ENCODE measurements at regions of chr6 and their contacts with region 1.

Region 1: GRCh38 chr6:17737704-17738252 is 31.1 kb upstream of the NUP153 start:
- DNase-seq: no peak

Region 2: DNA sequence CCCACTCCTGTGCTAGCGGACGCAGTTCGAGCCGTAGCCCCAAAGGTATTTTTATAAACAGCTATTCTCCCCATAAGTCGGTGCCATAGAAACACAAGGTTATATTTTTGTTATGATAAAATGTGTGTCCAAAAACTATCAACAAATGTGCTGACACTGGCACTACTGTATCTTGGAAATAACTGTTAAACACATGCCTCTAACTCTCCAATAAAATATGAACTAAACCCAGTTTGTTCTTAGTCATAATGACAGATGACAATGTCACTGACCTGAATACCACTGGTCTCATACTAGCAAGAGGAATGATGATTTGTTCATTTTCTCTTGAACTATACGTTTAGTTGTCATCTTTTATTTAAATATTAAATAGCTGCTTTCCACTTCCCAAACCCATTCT is 20.3 kb after region 1 on chr6:
- intact Hi-C with region 1: loop called in 1 of 2 experiments (anchors 1 kb)
- DNase-seq: no peak

Region 3: DNA sequence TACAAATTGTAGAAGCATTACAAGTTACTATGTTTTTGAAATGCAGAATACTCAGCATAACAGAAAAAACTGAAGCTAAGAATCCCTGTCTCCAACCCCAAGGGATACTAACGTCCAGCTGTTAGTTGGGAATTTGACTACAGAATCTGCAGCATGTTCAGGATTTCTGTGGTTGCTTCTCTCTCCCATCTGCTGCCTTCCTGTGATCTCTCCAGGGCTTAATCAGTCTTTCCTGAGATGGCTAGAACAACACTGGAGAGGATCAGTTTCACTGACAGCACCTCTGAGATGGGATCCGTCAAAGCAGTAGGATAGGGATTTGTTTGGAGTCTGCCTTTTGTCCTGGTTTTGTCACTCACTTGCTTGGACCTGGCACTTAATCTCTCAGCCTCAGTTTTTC is 42.3 kb after region 1 on chr6:
- intact Hi-C with region 1: no loop called
- DNase-seq: no peak

Region 4: GRCh38 chr6:17808609-17809008 is 70.8 kb after region 1 on chr6:
- intact Hi-C with region 1: no loop called
- DNase-seq: no peak

Measured in posterior vena cava (tissue), 2 donors.